ENCODE measurements at regions of chr3 and their contacts with region 1.

Region 1: DNA sequence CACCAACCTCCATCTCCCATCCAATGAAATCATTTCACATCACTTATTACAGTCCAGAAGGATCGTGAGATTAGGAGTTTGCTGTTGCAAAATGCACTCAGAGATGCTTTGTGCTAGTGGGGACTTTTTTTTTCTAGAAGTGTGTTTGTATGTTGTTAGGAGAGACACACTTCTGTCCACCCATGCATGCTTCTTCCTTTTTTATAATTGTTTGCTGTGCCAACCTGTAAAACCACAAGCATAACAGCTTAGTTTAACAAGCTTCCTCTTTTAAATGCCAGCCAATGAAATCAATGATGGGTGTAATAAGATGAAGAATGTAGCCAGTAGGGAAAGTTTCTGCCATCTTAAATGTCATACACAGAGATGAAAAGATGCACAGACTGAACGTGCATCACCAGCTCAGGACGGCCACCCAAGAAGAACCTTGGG is 305.6 kb upstream of the STT3B start:
- DNase-seq: peak in 3 of 14 experiments; percentile 74 to 87 (median 79)
- ATAC-seq: peak; percentile 74
- H3K4me3 ChIP-seq: no peak overlapping the region
- H3K4me3 Mint-ChIP-seq: peak overlapping the region; percentile 69
- H3K27ac ChIP-seq: peak overlapping the region; percentile 38 to 78
- H3K27ac Mint-ChIP-seq: peak overlapping the region; percentile 85
- H3K4me1 ChIP-seq: peaks cover 97% of the 10 kb centered on the region
- H3K4me1 Mint-ChIP-seq: peaks cover 96% of the 10 kb centered on the region
- H3K27me3 ChIP-seq: no peaks in the 10 kb centered on the region
- H3K27me3 Mint-ChIP-seq: no peaks in the 10 kb centered on the region
- CTCF ChIP-seq: no peak

Region 2: GRCh38 chr3:31029706-31030105 is 197.4 kb before region 1 on chr3:
- CTCF ChIA-PET with region 1: no interaction called
- POLR2A ChIA-PET with region 1: no interaction called
- intact Hi-C with region 1: no loop called
- DNase-seq: no peak
- ATAC-seq: no peak
- H3K4me3 ChIP-seq: no peak overlapping the region
- H3K4me3 Mint-ChIP-seq: no peak overlapping the region
- H3K27ac ChIP-seq: no peak overlapping the region
- H3K27ac Mint-ChIP-seq: no peak overlapping the region
- H3K4me1 ChIP-seq: no peaks in the 10 kb centered on the region
- H3K4me1 Mint-ChIP-seq: no peaks in the 10 kb centered on the region
- H3K27me3 ChIP-seq: no peaks in the 10 kb centered on the region
- H3K27me3 Mint-ChIP-seq: no peaks in the 10 kb centered on the region
- CTCF ChIP-seq: no peak

Region 3: DNA sequence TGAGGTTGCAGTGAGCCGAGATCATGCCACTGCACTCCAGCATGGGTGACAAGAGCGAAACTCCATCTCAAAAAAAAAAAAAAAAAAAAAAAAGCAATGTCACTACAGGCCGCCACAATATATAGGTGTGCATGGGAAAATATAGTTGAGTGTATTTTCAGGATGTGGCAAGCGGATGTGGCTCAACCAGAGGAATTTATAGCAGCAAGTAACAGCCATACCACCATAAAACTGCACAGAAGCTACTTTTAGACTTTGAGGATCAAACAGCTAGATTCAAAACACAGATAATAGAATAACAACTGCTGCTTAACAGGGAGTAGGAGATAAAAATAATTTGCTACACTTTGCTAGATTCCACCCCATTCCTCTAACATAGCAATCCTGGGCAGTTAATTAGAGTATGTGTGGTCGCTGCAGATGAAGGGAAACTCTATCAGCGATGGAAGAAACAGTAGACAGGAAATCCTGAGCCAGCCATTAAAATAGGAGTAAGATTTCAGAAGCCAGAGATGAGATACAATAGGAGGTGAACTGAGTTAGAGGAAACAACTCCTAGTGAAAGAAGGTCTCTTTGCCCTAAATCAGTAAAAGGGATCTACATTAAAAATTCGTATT is 13.2 kb before region 1 on chr3:
- CTCF ChIA-PET with region 1: interaction called, 4 read pairs
- POLR2A ChIA-PET with region 1: interaction called, 104 read pairs
- intact Hi-C with region 1: loop called in 1 of 2 experiments (anchors 1 kb)
- DNase-seq: peak in 8 of 14 experiments; percentile 11 to 89 (median 44)
- ATAC-seq: peak; percentile 75
- H3K4me3 ChIP-seq: no peak overlapping the region
- H3K4me3 Mint-ChIP-seq: peak overlapping the region; percentile 77
- H3K27ac ChIP-seq: peak overlapping the region in 1 of 2 donors; percentile 11
- H3K27ac Mint-ChIP-seq: peak overlapping the region; percentile 76
- H3K4me1 ChIP-seq: peaks cover 56% of the 10 kb centered on the region
- H3K4me1 Mint-ChIP-seq: peaks cover 100% of the 10 kb centered on the region
- H3K27me3 ChIP-seq: no peaks in the 10 kb centered on the region
- H3K27me3 Mint-ChIP-seq: no peaks in the 10 kb centered on the region
- CTCF ChIP-seq: no peak

Region 4: GRCh38 chr3:31462050-31462569 is 235.0 kb after region 1 on chr3:
- CTCF ChIA-PET with region 1: no interaction called
- POLR2A ChIA-PET with region 1: interaction called, 20 read pairs
- intact Hi-C with region 1: loop called (anchors 5 kb)
- DNase-seq: peak in 13 of 14 experiments; percentile 9 to 89 (median 40)
- ATAC-seq: peak; percentile 85
- H3K4me3 ChIP-seq: peak overlapping the region; percentile 30
- H3K4me3 Mint-ChIP-seq: peak overlapping the region; percentile 72
- H3K27ac ChIP-seq: peak overlapping the region; percentile 54 to 74
- H3K27ac Mint-ChIP-seq: peak overlapping the region; percentile 90
- H3K4me1 ChIP-seq: peaks cover 54% of the 10 kb centered on the region
- H3K4me1 Mint-ChIP-seq: peaks cover 74% of the 10 kb centered on the region
- H3K27me3 ChIP-seq: no peaks in the 10 kb centered on the region
- H3K27me3 Mint-ChIP-seq: no peaks in the 10 kb centered on the region
- CTCF ChIP-seq: peak; percentile 42

Measured in CD4-positive, alpha-beta T cell (primary cell).